A549 (cell line): ENCODE measurements at regions of chrX and their contacts with region 1.

Region 1: DNA sequence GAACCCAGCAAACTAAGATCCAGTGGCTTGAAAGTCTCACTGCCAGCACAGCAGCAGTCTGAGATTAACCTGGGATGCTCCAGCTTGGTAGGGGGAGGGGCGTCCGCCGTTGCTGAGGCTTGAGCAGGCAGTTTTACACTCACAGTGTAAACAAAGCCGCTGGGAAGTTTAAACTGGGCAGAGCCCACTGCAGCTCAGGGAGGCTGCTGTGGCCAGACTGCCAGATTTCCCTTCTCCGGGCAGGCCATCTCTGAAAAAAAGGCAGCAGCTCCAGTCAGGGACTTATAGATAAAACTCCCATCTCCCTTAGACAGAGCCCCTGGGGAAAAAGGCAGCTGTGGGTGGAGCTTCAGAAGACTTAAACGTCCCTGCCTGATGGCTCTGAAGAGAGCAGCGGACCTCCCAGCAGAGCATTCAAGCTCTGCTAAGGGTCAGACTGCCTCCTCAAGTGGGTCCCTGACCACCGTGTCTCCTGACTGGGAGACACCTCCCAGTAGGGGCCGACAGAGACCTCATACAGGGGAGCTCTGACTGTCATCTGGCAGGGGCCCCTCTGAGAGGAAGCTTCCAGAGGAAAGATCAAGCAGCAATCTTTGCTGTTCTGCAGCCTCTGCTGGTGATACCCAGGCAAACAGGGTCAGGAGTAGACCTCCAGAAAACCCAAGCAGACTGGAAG is 45.1 kb upstream of the CDX4 start:
- DNase-seq: no peak
- ATAC-seq: no peak
- H3K4me3 ChIP-seq: no peak overlapping the region
- H3K27ac ChIP-seq: no peak overlapping the region
- H3K4me1 ChIP-seq: no peaks in the 10 kb centered on the region
- CTCF ChIP-seq: no peak
- EP300 ChIP-seq: no peak
- POLR2A ChIP-seq: no peak
- RAD21 ChIP-seq: no peak

Region 2: GRCh38 chrX:72566448-72566847 is 835.3 kb before region 1 on chrX:
- CTCF ChIA-PET with region 1: no interaction called
- POLR2A ChIA-PET with region 1: interaction called, 10 read pairs
- DNase-seq: no peak
- ATAC-seq: no peak
- H3K4me3 ChIP-seq: no peak overlapping the region
- H3K27ac ChIP-seq: no peak overlapping the region
- H3K4me1 ChIP-seq: peaks cover 12% of the 10 kb centered on the region; the same call in 1 of the 3 replicates
- CTCF ChIP-seq: no peak
- EP300 ChIP-seq: no peak
- POLR2A ChIP-seq: no peak
- RAD21 ChIP-seq: no peak